CD14-positive monocyte (primary cell): ENCODE measurements at regions of chr1 and their contacts with region 1.

Region 1: DNA sequence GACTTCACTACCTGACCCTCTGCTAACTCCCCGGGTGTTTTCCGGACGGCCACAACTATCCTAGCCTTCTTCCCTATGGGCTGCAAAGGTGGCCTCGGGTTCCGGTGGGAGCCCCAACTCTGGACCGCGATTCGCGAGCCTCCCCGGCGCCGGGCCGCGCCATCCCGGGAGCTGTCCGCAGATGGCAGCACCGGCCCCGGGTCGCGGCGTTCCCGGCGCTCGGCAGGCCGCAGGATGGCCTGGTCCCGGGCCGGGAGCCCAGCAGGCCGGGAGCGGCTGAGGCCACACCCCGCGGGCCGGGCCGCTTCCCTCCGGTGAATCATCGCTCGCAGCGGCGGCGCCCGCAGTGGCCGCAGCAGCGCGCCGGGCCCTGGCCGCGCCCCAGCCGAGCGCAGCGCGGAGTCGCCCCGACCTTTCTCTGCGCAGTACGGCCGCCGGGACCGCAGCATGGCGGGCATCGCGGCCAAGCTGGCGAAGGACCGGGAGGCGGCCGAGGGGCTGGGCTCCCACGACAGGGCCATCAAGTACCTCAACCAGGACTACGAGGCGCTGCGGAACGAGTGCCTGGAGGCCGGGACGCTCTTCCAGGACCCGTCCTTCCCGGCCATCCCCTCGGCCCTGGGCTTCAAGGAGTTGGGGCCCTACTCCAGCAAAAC is at the start of gene CAPN2:
- DNase-seq: peak; percentile 84 to 91 (median 90)
- H3K4me3 ChIP-seq: peak within 1 kb of the TSS; percentile 77 to 86 (median 83)
- H3K4me3 Mint-ChIP-seq: peak within 1 kb of the TSS; percentile 96
- H3K27ac ChIP-seq: peak within 1 kb of the TSS; percentile 87 to 96
- H3K27ac Mint-ChIP-seq: peak within 1 kb of the TSS; percentile 90 to 98 (median 96)
- H3K4me1 ChIP-seq: peaks cover 46 to 49% of the 10 kb centered on the region in 2 donors
- H3K4me1 Mint-ChIP-seq: peaks cover 49% of the 10 kb centered on the region
- H3K27me3 ChIP-seq: no peaks in the 10 kb centered on the region
- H3K27me3 Mint-ChIP-seq: peaks cover 0 to 11% (median 8%) of the 10 kb centered on the region in 3 donors
- CTCF ChIP-seq: peak; percentile 73
- polyA plus RNA-seq, gene CAPN2: 127 to 186 (median 182) TPM

Region 2: GRCh38 chr1:223639331-223639749 is 73.0 kb before region 1 on chr1:
- intact Hi-C with region 1: no loop called
- DNase-seq: peak in 2 of 3 donors; percentile 3 to 6
- H3K4me3 ChIP-seq: no peak overlapping the region
- H3K4me3 Mint-ChIP-seq: no peak overlapping the region
- H3K27ac ChIP-seq: no peak overlapping the region
- H3K27ac Mint-ChIP-seq: no peak overlapping the region
- H3K4me1 ChIP-seq: no peaks in the 10 kb centered on the region
- H3K4me1 Mint-ChIP-seq: peaks cover 6% of the 10 kb centered on the region
- H3K27me3 ChIP-seq: no peaks in the 10 kb centered on the region
- H3K27me3 Mint-ChIP-seq: peaks cover 4 to 5% (median 5%) of the 10 kb centered on the region in 3 donors
- CTCF ChIP-seq: no peak

Region 3: DNA sequence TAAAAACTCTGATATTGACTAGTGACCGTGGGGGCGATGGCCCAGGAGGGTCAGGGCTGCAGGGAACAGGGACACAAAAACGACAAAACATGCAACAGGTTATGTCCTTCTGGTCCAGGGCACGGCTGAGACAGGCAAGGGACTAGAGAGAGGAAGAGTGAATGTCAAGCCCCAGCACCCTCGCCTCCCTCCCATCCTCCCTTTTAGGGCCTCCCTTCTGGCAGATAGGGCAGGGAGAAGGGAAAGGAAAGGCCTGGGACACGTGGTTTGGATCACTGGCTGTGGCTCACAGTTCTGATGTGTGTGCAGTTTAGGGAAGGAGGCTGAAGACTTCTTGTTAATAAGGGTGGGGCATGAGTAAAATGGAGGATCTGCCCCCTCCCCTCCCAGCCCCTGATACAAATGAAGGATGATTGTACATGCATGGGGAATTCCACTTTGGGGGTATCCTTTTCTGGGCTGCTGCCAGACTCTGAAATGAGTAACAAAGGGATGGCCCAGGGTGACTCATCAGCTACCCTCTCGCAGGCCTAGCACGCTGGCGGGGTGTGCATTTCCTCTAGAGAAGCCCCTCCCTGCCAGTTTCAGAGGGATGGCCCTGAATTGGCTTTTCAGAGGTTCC is 14.2 kb after region 1 on chr1:
- intact Hi-C with region 1: loop called (anchors 1 to 2 kb)
- DNase-seq: peak; percentile 99 to 100 (median 99)
- H3K4me3 ChIP-seq: peak overlapping the region in 1 of 3 experiments; percentile 43
- H3K4me3 Mint-ChIP-seq: peak overlapping the region; percentile 78 to 86
- H3K27ac ChIP-seq: peak overlapping the region; percentile 96 to 99
- H3K27ac Mint-ChIP-seq: peak overlapping the region; percentile 89 to 100 (median 98)
- H3K4me1 ChIP-seq: peaks cover 48 to 72% of the 10 kb centered on the region in 2 donors
- H3K4me1 Mint-ChIP-seq: peaks cover 70% of the 10 kb centered on the region
- H3K27me3 ChIP-seq: no peaks in the 10 kb centered on the region
- H3K27me3 Mint-ChIP-seq: peaks cover 0 to 3% (median 0%) of the 10 kb centered on the region in 3 donors
- CTCF ChIP-seq: no peak

Region 4: DNA sequence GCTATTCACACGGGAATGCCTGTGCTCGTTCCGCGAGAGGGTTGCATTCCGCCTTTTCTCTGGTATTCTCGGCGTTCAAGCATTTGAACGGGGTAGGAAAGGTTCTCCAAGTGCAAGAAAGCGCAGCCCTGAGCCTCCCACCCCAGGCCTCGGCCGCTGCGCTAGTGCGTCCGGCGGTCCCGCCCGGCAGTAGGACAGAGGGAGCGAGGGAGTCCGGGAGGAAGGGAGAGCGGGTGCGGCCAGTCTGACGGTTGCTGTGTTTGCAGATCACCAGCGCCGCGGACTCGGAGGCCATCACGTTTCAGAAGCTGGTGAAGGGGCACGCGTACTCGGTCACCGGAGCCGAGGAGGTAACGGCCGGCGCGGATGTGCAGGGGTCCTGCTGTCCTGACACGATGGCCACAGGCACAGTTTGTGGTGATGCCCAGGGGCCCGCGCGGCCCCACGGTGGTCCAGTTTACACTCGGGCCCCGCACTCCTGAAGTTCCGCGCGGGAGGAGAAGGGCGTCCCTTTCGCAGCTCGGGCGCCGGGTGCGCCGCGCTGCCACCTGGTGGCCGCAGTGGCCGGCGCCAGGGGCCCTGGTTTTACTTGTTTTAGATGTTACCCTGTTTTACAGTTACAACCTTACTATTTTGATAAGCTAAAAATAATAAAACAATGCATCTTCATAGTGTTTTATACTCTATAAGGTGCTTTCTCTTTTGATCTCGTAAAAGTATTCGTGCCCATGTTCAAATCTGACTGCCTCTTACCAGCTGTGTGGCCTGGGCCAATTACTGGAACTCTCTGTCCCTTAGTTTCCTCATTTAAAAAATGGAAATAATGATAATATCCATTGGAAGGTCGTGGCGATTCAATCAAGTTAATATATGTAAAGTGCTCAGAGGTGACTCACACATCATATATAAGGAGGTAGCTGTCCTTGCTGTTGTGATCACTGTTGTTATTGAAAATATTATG is 36.7 kb after region 1 on chr1:
- intact Hi-C with region 1: loop called (anchors 2 to 5 kb)
- DNase-seq: peak; percentile 46 to 67 (median 63)
- H3K4me3 ChIP-seq: peak overlapping the region; percentile 17 to 74 (median 32)
- H3K4me3 Mint-ChIP-seq: peak overlapping the region; percentile 77 to 83
- H3K27ac ChIP-seq: peak overlapping the region; percentile 3 to 23
- H3K27ac Mint-ChIP-seq: peak overlapping the region in 5 of 7 donors; percentile 5 to 87 (median 42)
- H3K4me1 ChIP-seq: peaks cover 12 to 26% of the 10 kb centered on the region in 2 donors
- H3K4me1 Mint-ChIP-seq: peaks cover 24% of the 10 kb centered on the region
- H3K27me3 ChIP-seq: no peaks in the 10 kb centered on the region
- H3K27me3 Mint-ChIP-seq: peaks cover 0 to 2% (median 0%) of the 10 kb centered on the region in 3 donors
- CTCF ChIP-seq: peak; percentile 97

Region 5: GRCh38 chr1:223794136-223794880 is 82.0 kb after region 1 on chr1:
- intact Hi-C with region 1: no loop called
- DNase-seq: no peak
- H3K4me3 ChIP-seq: no peak overlapping the region
- H3K4me3 Mint-ChIP-seq: no peak overlapping the region
- H3K27ac ChIP-seq: no peak overlapping the region
- H3K27ac Mint-ChIP-seq: no peak overlapping the region
- H3K4me1 ChIP-seq: no peaks in the 10 kb centered on the region
- H3K4me1 Mint-ChIP-seq: peaks cover 3% of the 10 kb centered on the region
- H3K27me3 ChIP-seq: no peaks in the 10 kb centered on the region
- H3K27me3 Mint-ChIP-seq: no peaks in the 10 kb centered on the region
- CTCF ChIP-seq: no peak

Region 6: DNA sequence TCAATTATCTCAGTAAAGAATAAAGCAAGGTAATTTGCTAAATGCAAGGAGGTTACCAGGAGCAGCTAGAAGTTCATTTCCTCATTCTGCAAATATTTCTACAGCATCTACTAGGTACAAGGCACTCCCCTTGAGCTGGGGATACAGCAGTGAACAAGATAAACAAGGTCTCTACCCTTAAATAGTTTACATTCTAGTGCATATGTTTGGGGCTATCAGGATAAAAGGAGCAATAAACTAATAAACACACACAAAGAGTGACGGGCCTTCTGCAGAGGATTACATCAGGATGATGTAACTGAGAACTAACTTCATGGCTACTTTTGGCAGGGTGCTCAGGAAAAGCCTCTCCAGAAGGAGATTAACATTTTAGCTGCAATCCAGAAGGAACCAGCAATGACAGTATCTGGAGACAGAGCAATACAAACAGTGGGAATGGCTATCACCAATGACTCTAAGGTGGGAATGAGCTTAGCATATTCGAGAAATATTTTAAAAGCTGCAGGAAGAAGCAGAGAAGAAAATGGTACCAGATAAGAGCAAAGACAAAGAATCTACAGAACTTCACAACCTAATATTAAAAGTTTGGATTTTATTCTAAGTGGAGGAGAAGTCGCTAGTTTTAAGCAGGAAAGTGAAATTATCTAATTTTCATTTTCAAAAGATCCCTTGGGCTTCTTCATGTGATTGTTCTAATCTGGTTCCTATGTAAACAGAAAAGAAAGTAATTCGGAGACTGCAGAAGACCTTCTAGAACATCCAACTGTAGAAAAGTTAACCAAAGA is 107.6 kb after region 1 on chr1:
- intact Hi-C with region 1: loop called in 1 of 2 experiments (anchors 10 kb)
- DNase-seq: no peak
- H3K4me3 ChIP-seq: no peak overlapping the region
- H3K4me3 Mint-ChIP-seq: no peak overlapping the region
- H3K27ac ChIP-seq: peak overlapping the region in 1 of 2 donors; percentile 27
- H3K27ac Mint-ChIP-seq: peak overlapping the region in 5 of 7 donors; percentile 3 to 66 (median 56)
- H3K4me1 ChIP-seq: peaks cover 16 to 21% of the 10 kb centered on the region in 2 donors
- H3K4me1 Mint-ChIP-seq: peaks cover 35% of the 10 kb centered on the region
- H3K27me3 ChIP-seq: no peaks in the 10 kb centered on the region
- H3K27me3 Mint-ChIP-seq: no peaks in the 10 kb centered on the region
- CTCF ChIP-seq: no peak